ENCODE measurements at regions of chr2 and their contacts with region 1.

Region 1: GRCh38 chr2:38224821-38225450 is 149.0 kb upstream of the CYP1B1 start:
- DNase-seq: no peak
- ATAC-seq: no peak
- H3K4me3 ChIP-seq: no peak overlapping the region
- H3K4me3 Mint-ChIP-seq: no peak overlapping the region
- H3K27ac ChIP-seq: no peak overlapping the region
- H3K27ac Mint-ChIP-seq: no peak overlapping the region
- H3K4me1 ChIP-seq: no peaks in the 10 kb centered on the region
- H3K4me1 Mint-ChIP-seq: no peaks in the 10 kb centered on the region
- H3K27me3 ChIP-seq: peaks cover 0 to 3% of the 10 kb centered on the region in 2 experiments
- H3K27me3 Mint-ChIP-seq: peaks cover 32 to 47% of the 10 kb centered on the region in 2 donors

Region 2: GRCh38 chr2:37436323-37436722 is 788.6 kb before region 1 on chr2:
- CTCF ChIA-PET with region 1: no interaction called
- POLR2A ChIA-PET with region 1: interaction called in 1 of 2 experiments, 14 read pairs
- DNase-seq: no peak
- ATAC-seq: no peak
- H3K4me3 ChIP-seq: no peak overlapping the region
- H3K4me3 Mint-ChIP-seq: no peak overlapping the region
- H3K27ac ChIP-seq: no peak overlapping the region
- H3K27ac Mint-ChIP-seq: no peak overlapping the region
- H3K4me1 ChIP-seq: no peaks in the 10 kb centered on the region
- H3K4me1 Mint-ChIP-seq: no peaks in the 10 kb centered on the region
- H3K27me3 ChIP-seq: peaks cover 0 to under 1% of the 10 kb centered on the region in 2 experiments
- H3K27me3 Mint-ChIP-seq: peaks cover 4 to 11% of the 10 kb centered on the region in 2 donors

Region 3: DNA sequence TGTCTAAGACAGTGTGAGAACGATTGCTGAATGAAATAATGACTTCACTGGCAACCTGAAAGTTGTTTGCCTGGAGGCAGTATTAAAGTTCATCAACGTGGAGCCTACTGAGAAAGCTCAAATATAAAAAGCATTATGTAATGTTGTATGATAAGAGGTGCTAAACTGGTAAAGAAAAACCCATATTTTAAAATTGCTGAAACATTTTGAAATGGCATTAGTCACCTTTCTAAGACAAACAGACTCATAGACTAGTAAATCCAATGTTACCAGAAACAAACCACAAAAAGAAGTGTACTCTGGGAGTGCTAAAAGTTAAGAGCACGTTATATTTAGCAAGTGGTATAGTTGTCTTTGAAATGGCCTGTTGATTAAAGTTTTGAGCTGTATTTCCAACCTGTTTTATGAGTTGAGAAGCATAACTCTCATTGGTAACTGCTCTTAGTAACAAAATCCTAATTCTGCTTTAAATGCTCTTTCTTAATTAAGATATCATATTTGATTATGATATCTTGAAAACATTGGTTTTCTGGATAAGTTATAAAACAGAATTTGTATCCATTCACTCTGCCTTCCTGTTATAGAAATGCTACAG is 211.7 kb before region 1 on chr2:
- CTCF ChIA-PET with region 1: no interaction called
- POLR2A ChIA-PET with region 1: no interaction called
- DNase-seq: no peak
- ATAC-seq: no peak
- H3K4me3 ChIP-seq: no peak overlapping the region
- H3K4me3 Mint-ChIP-seq: no peak overlapping the region
- H3K27ac ChIP-seq: no peak overlapping the region
- H3K27ac Mint-ChIP-seq: no peak overlapping the region
- H3K4me1 ChIP-seq: no peaks in the 10 kb centered on the region
- H3K4me1 Mint-ChIP-seq: no peaks in the 10 kb centered on the region
- H3K27me3 ChIP-seq: peaks cover 0 to 4% of the 10 kb centered on the region in 2 experiments
- H3K27me3 Mint-ChIP-seq: no peaks in the 10 kb centered on the region

Region 4: GRCh38 chr2:38174646-38175423 is 50.1 kb before region 1 on chr2:
- CTCF ChIA-PET with region 1: no interaction called
- POLR2A ChIA-PET with region 1: no interaction called
- DNase-seq: no peak
- ATAC-seq: no peak
- H3K4me3 ChIP-seq: no peak overlapping the region
- H3K4me3 Mint-ChIP-seq: no peak overlapping the region
- H3K27ac ChIP-seq: no peak overlapping the region
- H3K27ac Mint-ChIP-seq: no peak overlapping the region
- H3K4me1 ChIP-seq: no peaks in the 10 kb centered on the region
- H3K4me1 Mint-ChIP-seq: no peaks in the 10 kb centered on the region
- H3K27me3 ChIP-seq: peaks cover 6% of the 10 kb centered on the region in 2 experiments
- H3K27me3 Mint-ChIP-seq: peaks cover 29% of the 10 kb centered on the region in 2 donors

Region 5: DNA sequence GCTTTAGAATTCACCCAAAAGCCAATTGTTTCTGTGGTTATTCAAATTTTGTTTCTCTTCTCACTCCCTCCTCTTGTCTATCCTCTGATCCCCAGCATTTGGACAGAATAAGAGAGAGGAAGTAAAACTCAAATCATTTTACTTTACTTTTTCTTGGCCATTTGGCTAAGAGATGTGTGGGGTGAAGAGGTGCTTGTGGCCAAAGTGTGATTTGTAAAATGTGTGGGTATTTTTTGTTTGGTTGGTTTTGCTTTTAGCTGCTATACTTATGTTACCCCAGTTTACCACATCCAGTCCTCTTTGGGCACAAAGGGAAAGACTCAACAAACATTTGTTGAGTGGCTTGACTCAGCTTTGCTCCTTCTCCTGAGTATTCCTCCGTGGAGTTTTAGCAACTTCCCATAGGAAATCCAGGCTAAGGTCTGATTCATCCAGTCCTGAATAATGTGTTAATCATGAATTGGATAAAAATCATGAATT is 39.9 kb before region 1 on chr2:
- CTCF ChIA-PET with region 1: no interaction called
- POLR2A ChIA-PET with region 1: no interaction called
- DNase-seq: peak in 1 of 35 experiments; percentile 6
- ATAC-seq: no peak
- H3K4me3 ChIP-seq: no peak overlapping the region
- H3K4me3 Mint-ChIP-seq: no peak overlapping the region
- H3K27ac ChIP-seq: no peak overlapping the region
- H3K27ac Mint-ChIP-seq: no peak overlapping the region
- H3K4me1 ChIP-seq: no peaks in the 10 kb centered on the region
- H3K4me1 Mint-ChIP-seq: peaks cover 0 to 6% (median 4%) of the 10 kb centered on the region in 3 donors
- H3K27me3 ChIP-seq: no peaks in the 10 kb centered on the region
- H3K27me3 Mint-ChIP-seq: peaks cover 3 to 8% of the 10 kb centered on the region in 2 donors

Region 6: DNA sequence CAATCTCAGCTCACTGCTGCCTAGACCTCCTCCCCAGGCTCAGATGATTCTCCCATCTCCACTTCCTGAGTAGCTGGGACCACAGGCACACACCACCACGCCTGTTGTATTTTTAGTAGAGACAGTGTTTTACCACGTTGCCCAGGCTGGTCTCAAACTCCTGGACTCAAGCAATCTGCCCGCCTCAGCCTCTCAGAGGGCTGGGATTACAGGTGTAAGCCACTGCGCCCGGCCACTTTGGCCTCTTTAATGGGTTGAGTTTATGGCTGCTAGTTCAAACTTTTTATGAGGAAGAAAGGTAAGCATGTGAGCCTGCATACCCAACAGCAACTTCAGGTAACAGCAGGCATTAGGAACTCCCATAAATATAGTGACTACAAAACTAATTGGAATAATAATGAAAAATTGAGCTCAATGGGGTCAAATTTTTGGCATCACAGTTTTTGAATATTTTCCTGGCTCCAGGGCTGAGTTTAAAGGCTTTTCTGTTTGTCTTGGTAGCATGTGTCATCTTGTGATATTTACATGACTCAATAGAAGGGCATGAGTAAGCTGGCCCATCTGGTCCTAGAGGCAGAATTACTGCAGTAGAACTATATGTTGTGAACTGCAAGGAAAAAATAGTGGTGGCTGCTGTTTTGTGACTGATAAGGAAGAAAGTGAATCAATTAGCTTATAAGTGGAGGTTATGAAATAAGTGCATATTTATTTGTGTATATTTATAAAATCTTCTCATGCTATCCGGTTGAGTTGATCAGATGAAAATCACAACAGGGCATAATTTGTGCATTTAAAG is 465.8 kb after region 1 on chr2:
- CTCF ChIA-PET with region 1: no interaction called
- POLR2A ChIA-PET with region 1: no interaction called
- DNase-seq: no peak
- ATAC-seq: peak in 3 of 4 experiments; percentile 54 to 77 (median 55)
- H3K4me3 ChIP-seq: no peak overlapping the region
- H3K4me3 Mint-ChIP-seq: peak overlapping the region in 1 of 3 donors; percentile 34
- H3K27ac ChIP-seq: no peak overlapping the region
- H3K27ac Mint-ChIP-seq: peak overlapping the region; percentile 83 to 85
- H3K4me1 ChIP-seq: peaks cover 0 to 35% of the 10 kb centered on the region in 2 experiments
- H3K4me1 Mint-ChIP-seq: peaks cover 35 to 62% (median 41%) of the 10 kb centered on the region in 3 donors
- H3K27me3 ChIP-seq: no peaks in the 10 kb centered on the region
- H3K27me3 Mint-ChIP-seq: no peaks in the 10 kb centered on the region

Measured in T-cell (primary cell).